Right cardiac atrium (tissue), 5 donors: ENCODE measurements at regions of chr1 and their contacts with region 1.

Region 1: DNA sequence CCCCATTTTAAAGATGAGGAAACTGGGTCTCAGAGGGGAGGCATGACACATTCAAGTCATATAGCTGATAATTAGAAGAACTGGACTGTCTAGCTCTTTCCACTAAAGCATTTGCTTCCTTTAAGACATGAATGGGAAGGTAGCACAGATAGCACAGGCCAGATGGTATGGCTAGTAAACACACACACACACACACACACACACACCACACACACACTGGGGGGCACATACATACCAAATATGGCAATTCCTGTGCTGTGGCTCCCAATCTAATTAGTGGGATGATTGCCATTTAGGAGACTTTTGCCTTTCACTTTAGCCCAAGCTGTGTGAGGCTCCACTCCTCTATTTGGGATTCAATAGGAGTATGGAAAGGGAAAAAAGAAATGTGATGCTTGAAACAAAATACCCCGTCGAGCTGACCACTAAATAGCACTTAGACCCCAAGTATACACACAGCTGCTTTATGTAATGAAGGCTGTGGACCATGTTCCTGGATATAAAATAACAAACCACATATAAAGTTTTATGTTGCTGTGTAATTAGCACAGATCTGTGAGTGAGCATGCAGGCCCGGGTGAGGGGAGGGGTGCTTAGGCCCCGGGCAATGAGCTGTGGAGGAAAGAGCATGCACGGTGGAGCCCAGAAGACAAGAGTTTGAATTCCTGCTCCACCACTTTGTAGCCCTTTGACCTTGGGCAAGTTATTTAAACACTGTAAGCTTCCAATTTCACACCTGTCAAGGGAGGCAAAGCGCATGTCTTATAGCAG is 6.7 kb upstream of the TRABD2B start:
- DNase-seq: no peak
- ATAC-seq: peak in 1 of 2 donors; percentile 15
- H3K4me3 ChIP-seq: no peak overlapping the region
- H3K27ac ChIP-seq: peak overlapping the region; percentile 16
- H3K4me1 ChIP-seq: no peaks in the 10 kb centered on the region
- H3K27me3 ChIP-seq: no peaks in the 10 kb centered on the region

Region 2: GRCh38 chr1:48048064-48048463 is 44.1 kb after region 1 on chr1:
- intact Hi-C with region 1: loop called in 2 of 4 experiments (anchors 2 to 5 kb)
- DNase-seq: peak in 1 of 3 donors; percentile 47
- ATAC-seq: peak in 1 of 2 donors; percentile 58
- H3K4me3 ChIP-seq: no peak overlapping the region
- H3K27ac ChIP-seq: no peak overlapping the region
- H3K4me1 ChIP-seq: peaks cover 13% of the 10 kb centered on the region
- H3K27me3 ChIP-seq: no peaks in the 10 kb centered on the region

Region 3: GRCh38 chr1:48177257-48177656 is 173.3 kb after region 1 on chr1:
- intact Hi-C with region 1: no loop called
- DNase-seq: no peak
- ATAC-seq: no peak
- H3K4me3 ChIP-seq: no peak overlapping the region
- H3K27ac ChIP-seq: no peak overlapping the region
- H3K4me1 ChIP-seq: no peaks in the 10 kb centered on the region
- H3K27me3 ChIP-seq: no peaks in the 10 kb centered on the region

Region 4: GRCh38 chr1:48202030-48202752 is 198.3 kb after region 1 on chr1:
- intact Hi-C with region 1: no loop called
- DNase-seq: peak; percentile 57 to 81 (median 68)
- ATAC-seq: peak; percentile 60 to 74
- H3K4me3 ChIP-seq: no peak overlapping the region
- H3K27ac ChIP-seq: no peak overlapping the region
- H3K4me1 ChIP-seq: no peaks in the 10 kb centered on the region
- H3K27me3 ChIP-seq: no peaks in the 10 kb centered on the region